H1 (cell line): ENCODE measurements at regions of chr15 and their contacts with region 1.

Region 1: DNA sequence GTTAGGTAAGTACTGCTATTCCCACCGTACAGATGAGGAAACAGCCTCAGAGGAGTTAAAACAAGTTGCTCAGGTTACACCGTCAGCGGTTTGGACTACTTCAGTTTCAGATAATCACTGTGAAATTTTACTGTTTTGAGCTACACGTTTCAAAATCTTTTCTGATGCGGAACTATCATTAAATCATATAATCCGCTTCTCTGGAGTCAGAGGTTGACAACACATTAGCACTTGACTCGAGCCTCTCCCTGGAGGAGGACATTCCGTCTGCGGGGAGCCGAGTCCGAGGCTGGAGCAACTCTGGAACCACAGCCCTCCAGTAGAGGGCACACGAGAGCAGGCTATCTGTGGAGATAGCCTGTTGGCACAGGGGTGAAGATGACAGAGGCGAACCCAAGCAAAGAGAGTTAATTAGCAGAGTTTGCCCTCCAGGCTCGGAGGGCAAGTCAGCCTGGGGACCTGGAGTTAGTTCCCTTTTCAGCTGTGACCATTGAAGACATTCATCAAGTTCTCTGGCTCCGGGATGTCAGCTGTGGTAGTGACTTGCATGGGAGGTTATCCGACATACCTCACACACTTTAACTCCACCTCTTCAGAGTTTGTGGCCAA is 131.2 kb downstream of the IGF1R start:
- DNase-seq: peak; percentile 82 to 96
- H3K4me3 ChIP-seq: no peak overlapping the region
- H3K27ac ChIP-seq: no peak overlapping the region
- H3K4me1 ChIP-seq: peaks cover 2 to 22% (median 15%) of the 10 kb centered on the region in 4 experiments; a peak in 5 of 7 replicates
- H3K27me3 ChIP-seq: no peaks in the 10 kb centered on the region
- CTCF ChIP-seq: peak; percentile 81 to 99 (median 92)
- EP300 ChIP-seq: no peak
- POLR2A ChIP-seq: no peak
- RAD21 ChIP-seq: peak; percentile 89 to 95

Region 2: GRCh38 chr15:98674336-98674735 is 105.2 kb before region 1 on chr15:
- CTCF ChIA-PET with region 1: interaction called, 13 read pairs
- POLR2A ChIA-PET with region 1: interaction called, 7 read pairs
- DNase-seq: no peak
- H3K4me3 ChIP-seq: no peak overlapping the region
- H3K27ac ChIP-seq: 0 out of 2 replicates have a peak overlapping the region, but pooled peaks have one; percentile 1
- H3K4me1 ChIP-seq: peaks cover 14 to 36% (median 25%) of the 10 kb centered on the region in 4 experiments
- H3K27me3 ChIP-seq: no peaks in the 10 kb centered on the region
- CTCF ChIP-seq: no peak
- EP300 ChIP-seq: no peak
- POLR2A ChIP-seq: no peak
- RAD21 ChIP-seq: no peak

Region 3: DNA sequence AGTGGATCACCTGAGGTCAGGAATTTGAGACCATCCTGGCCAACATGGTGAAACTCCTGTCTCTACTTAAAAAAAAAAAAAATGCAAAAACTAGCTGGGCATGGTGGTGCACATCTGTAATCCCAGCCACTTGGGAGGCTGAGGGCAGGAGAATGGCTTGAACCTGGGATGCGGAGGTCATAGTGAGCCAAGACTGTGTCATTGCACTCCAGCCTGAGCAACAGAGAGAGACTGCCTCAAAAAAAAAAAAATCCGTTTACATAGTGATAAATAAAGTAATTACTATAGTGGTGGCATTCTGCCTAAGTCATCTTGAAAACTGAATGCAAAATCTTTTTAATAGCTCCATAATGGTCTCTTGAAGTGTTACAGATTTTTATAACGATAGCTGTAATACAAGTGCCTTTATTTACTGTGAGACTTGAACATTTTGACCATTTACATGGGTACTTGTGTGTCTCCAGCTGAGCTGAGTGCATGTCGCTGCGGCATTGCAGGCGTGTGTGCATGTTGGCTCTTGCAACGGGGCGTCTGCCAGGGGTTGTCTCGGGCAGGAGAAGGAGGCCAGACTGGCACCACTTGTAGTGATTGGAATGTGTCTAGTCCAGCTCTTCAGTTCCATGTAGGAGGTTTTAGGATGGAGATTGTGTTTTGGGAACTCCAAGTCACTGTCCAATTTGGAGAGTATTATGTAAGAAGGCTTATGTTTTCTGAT is 19.3 kb before region 1 on chr15:
- CTCF ChIA-PET with region 1: interaction called, 12 read pairs
- POLR2A ChIA-PET with region 1: interaction called, 6 read pairs
- DNase-seq: no peak
- H3K4me3 ChIP-seq: no peak overlapping the region
- H3K27ac ChIP-seq: no peak overlapping the region
- H3K4me1 ChIP-seq: peaks cover 2 to 14% (median 10%) of the 10 kb centered on the region in 4 experiments; a peak in 5 of 7 replicates
- H3K27me3 ChIP-seq: no peaks in the 10 kb centered on the region
- CTCF ChIP-seq: no peak
- EP300 ChIP-seq: no peak
- POLR2A ChIP-seq: no peak
- RAD21 ChIP-seq: no peak

Region 4: DNA sequence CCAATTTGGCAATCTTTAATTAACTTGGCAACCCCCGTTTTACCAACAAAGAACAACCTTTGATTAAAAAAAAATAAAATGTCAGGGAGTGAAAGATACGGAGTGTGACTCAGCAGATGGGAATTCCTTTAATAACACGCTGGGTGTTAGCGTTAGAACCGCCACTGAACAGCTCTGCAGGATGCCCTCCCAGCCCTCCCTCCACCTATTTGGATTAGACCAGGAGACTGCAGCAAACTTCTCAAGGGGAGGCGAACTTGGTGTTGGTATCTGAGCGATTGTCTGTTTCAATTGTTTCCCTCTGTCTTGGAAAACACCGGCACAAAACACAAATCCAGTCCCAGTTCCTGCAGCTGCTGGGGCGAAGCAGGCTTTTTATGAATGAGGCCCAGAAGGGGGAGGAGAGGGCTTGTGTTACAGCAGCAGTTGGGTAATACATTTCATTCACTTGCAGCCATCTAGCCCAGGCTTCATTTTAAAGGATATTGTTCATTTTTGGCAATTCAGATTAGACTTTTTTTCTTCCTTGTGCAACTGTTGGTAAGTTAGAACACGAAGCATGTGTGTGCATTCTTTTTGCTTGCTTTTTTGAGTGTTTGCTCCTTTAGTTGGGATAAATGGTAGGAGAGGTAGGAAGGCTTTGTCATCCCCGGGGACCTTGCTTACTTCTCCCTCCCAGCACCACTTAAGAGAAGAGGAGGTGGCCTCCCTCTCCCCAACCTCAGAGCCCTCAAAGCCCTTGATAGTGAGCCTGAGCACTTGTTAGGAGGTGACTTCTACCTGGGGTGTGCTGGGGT is 21.1 kb after region 1 on chr15:
- CTCF ChIA-PET with region 1: interaction called, 36 read pairs
- POLR2A ChIA-PET with region 1: interaction called, 3 read pairs
- DNase-seq: peak in 1 of 2 experiments; percentile 74
- H3K4me3 ChIP-seq: peak overlapping the region; percentile 17 to 53 (median 24); a peak in 5 of 8 replicates
- H3K27ac ChIP-seq: peak overlapping the region; percentile 82
- H3K4me1 ChIP-seq: peaks cover 21 to 50% (median 44%) of the 10 kb centered on the region in 4 experiments
- H3K27me3 ChIP-seq: no peaks in the 10 kb centered on the region
- CTCF ChIP-seq: no peak
- EP300 ChIP-seq: 0 out of 3 replicates have a peak, but pooled peaks of 1 of the 2 experiments have one; percentile 30
- POLR2A ChIP-seq: no peak
- RAD21 ChIP-seq: no peak; a peak in 1 of 4 replicates

Region 5: GRCh38 chr15:98850961-98851573 is 71.5 kb after region 1 on chr15:
- CTCF ChIA-PET with region 1: interaction called, 8 read pairs
- POLR2A ChIA-PET with region 1: interaction called, 11 read pairs
- DNase-seq: peak; percentile 57 to 78
- H3K4me3 ChIP-seq: peak overlapping the region in 3 of 4 experiments; percentile 20 to 72 (median 69); a peak in 4 of 8 replicates
- H3K27ac ChIP-seq: no peak overlapping the region
- H3K4me1 ChIP-seq: peaks cover 20 to 38% (median 30%) of the 10 kb centered on the region in 4 experiments
- H3K27me3 ChIP-seq: no peaks in the 10 kb centered on the region
- CTCF ChIP-seq: peak; percentile 85 to 98 (median 93)
- EP300 ChIP-seq: no peak
- POLR2A ChIP-seq: no peak
- RAD21 ChIP-seq: peak; percentile 97